Dendritic cell treated with granulocyte-macrophage colony-stimulating factor and Interleukin-4, amounts not matched to agents 40 ng/mL and 50 ng/mL, for 4 days (primary cell): ENCODE measurements at regions of chr7 and their contacts with region 1.

Region 1: DNA sequence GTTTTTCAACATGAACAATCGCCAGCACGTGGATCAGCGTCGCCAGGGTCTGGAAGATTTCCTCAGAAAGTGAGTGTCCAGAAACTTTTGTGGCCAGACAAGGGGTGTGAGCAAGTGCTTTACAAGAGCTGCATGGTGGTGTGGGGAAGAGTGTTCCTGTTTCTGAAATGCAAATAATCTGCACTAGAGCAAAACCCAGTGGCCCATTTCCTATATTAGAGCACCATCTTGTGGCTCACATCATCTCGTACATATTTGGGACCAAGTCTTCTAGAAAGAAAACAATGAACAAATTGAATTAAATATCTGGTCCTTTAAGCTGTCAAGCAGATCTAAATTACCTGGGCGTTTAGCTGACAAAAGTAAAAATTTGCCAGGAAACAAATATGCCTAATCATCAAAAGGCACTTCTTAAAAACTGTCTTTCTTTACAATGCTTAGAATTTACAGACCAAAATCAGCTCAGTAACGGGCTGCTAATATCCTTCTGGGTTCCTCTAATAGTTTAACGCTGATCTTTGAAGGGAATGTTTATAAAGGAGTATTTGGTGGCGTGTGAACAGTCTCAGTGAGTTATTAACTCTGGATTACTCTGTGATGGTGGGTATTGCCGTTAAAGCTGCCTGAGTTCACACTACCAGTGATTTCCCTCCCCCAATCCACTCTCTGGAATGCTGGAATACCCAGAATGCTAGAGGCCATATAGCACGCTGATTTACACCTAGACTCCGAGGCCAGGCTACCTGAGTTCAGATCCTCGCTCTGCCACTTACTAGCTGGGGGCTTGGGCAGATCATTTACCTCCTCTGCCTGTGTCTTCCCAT is 73.6 kb downstream of the SNX10 start:
- H3K4me3 Mint-ChIP-seq: no peak overlapping the region
- H3K27ac Mint-ChIP-seq: no peak overlapping the region
- H3K4me1 Mint-ChIP-seq: peaks cover 12% of the 10 kb centered on the region
- H3K27me3 Mint-ChIP-seq: no peaks in the 10 kb centered on the region

Region 2: DNA sequence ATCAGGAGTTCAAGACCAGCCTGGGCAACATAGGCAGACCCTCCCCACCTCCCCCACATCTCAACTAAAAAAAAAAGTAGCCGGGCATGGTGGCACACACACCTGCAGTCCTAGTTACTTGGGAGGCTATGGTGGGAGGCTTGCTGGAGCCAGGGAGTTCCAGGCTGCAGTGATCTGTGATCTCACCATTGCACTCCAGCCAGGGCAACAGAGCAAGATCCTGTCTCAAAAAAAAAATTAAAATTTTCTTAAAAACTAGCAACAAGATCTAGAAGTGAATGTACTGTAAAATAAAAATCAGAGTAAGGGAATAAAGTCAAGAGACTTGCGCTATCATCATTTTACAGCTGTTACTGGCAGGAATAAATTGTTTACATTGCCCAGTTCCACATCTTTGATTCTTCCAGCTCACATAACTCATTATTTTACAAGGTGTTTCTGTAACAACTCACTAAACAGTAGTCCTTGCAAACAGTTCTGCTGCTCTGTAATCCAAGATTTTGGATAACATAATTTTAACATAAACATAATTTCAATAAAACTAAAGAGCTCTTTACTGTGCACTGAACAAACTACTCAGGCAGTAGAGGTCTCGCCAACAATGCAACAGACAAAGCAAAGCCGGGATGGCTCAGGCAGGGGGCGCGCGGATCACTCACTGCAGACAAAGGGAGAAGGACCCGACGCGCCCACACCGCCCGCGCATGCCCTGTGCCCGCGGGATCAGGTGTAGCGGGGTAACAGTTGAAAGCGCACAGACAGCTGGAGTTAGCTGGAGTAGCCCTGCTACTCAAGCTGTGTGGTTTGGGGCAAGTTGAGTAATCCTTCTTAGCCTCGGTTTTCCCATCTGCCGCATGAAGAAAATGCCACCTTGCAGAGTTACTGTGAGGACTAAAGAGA is 286.6 kb before region 1 on chr7:
- intact Hi-C with region 1: loop called (anchors 5 kb)
- H3K4me3 Mint-ChIP-seq: peak overlapping the region; percentile 7
- H3K27ac Mint-ChIP-seq: no peak overlapping the region
- H3K4me1 Mint-ChIP-seq: no peaks in the 10 kb centered on the region
- H3K27me3 Mint-ChIP-seq: peaks cover 59% of the 10 kb centered on the region

Region 3: DNA sequence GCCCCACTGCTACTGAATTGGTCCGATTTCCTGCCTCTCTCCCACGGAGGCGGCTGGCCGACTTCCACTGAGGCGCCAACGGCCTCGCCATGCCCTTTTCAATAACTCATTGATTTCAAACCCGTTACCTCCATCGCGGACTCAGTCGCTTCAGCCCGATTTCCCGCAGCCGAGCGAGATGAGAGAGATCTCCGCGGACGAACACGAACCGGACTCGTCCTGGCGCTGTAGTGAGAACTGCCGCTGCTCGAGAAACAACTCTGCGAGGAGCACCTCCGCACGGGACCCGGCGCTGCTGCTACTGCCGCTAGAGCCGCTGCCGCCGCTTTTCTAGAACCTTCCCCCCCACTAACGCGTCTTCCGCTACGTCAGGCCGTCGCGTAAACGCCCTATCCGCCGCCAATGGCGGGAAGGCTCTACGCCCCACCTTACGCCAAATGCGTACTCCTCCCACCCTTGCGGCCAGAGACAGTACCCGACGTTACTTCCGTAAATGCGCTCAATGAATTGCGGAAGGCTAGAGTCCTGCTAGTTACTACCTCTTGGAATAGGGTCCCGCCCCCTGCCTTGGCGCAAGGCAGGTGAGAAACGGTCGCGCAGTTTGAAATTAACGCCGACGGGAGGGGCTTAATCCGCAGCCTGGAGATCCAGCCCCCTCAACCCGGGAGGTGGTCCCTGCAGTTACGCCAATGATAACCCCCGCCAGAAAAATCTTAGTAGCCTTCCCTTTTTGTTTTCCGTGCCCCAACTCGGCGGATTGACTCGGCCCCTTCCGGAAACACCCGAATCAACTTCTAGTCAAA is 164.6 kb before region 1 on chr7 and contains the start of gene HNRNPA2B1:
- intact Hi-C with region 1: loop called (anchors 2 kb)
- H3K4me3 Mint-ChIP-seq: peak within 1 kb of the TSS; percentile 99
- H3K27ac Mint-ChIP-seq: peak within 1 kb of the TSS; percentile 100
- H3K4me1 Mint-ChIP-seq: peaks cover 42% of the 10 kb centered on the region
- H3K27me3 Mint-ChIP-seq: no peaks in the 10 kb centered on the region

Region 4: DNA sequence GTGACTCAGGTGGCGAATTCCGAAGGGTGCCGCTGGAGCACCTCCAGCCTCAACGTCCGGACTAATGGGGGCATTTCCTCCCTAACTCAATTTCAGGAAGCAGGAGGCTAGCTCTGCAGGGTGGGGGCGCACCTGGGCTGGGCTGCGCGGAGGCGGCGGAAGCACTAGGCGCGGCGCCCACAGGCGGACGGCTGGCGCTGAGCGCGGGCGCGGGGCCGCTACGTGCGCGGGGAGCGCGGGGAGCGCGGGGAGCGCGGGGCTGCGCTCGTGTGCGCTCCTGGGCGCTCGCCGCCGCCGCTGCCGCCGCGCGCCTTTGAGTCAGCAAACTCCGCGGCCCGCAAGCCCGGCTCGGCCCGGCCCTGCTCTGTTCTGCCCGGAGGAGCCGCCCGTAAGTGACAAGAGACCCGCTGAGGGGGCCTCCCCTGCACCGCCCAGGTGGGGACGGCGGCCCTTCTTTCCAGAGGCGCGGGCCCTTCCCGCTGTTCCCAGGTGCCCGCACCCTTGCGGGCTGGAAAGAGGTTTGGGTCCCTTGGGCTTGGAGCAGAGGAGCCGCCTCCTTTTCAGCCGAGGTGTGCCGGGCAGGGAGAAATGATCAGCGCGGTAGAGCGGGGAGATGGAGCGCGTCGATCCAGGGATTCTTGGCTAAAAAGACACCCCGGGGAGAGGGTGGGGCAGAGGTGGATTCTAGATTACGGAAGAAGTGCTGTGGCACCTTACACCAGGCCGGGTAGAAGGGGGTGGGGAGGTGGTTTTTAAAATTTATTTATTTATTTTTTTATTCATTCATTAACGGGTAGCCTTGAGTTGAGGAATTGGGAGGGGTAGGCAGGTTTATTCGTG is 73.4 kb before region 1 on chr7 and contains the start of gene SNX10:
- intact Hi-C with region 1: loop called (anchors 5 kb)
- H3K4me3 Mint-ChIP-seq: peak within 1 kb of the TSS; percentile 93
- H3K27ac Mint-ChIP-seq: peak within 1 kb of the TSS; percentile 92
- H3K4me1 Mint-ChIP-seq: peaks cover 68% of the 10 kb centered on the region
- H3K27me3 Mint-ChIP-seq: no peaks in the 10 kb centered on the region

Region 5: GRCh38 chr7:26398756-26399501 is 33.6 kb after region 1 on chr7:
- intact Hi-C with region 1: no loop called
- H3K4me3 Mint-ChIP-seq: peak overlapping the region; percentile 98
- H3K27ac Mint-ChIP-seq: peak overlapping the region; percentile 97
- H3K4me1 Mint-ChIP-seq: peaks cover 46% of the 10 kb centered on the region
- H3K27me3 Mint-ChIP-seq: peaks cover 6% of the 10 kb centered on the region

Region 6: GRCh38 chr7:27160546-27161213 is 795.4 kb after region 1 on chr7:
- intact Hi-C with region 1: loop called (anchors 2 kb)
- H3K4me3 Mint-ChIP-seq: peak overlapping the region; percentile 92
- H3K27ac Mint-ChIP-seq: peak overlapping the region; percentile 80
- H3K4me1 Mint-ChIP-seq: peaks cover 60% of the 10 kb centered on the region
- H3K27me3 Mint-ChIP-seq: peaks cover 87% of the 10 kb centered on the region